ENCODE measurements at regions of chr20 and their contacts with region 1.

Region 1: GRCh38 chr20:32762149-32762753 is at the start of gene DNMT3B:
- DNase-seq: no peak
- H3K4me3 ChIP-seq: peak within 1 kb of the TSS; percentile 75
- CTCF ChIP-seq: peak; percentile 14

Region 2: DNA sequence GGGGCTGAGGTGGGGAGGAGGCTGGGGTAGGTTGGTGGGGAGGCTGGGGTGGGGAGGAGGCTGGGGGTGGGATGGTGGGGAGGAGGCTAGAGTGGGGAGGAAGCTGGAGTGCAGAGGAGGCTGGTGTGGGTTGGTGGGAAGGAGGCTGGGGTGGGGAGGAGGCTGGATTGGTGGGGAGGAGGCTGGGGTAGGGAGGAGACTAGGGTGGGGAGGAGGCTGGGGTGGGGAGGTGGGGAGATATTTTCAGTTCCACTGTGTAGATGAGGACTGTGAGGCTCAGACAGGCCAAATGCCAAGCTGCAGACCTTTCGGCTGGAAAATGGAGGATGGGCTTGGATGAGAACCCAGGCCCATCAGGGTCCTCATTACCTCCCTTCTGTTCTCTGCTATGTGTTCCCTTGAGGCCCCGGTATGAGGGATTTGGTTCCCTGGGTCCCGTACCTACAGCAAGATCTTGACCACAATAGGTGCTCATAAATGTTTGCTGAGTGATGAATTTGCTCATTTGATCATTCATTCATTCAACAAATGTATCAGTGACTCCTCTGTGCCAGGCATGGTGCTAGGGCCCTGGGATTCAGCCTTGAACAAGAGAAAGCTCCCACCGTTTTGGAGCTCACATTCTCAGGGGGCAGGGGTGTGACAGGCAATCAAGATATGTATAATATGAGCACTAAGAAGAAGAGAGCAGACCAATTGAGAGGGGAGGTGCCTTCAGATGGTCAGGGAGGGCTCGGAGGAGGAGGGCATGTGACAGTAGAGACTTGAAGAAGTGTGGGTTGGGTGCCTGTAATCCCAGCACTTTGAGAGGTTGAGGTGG is 141.0 kb before region 1 on chr20:
- CTCF ChIA-PET with region 1: no interaction called
- POLR2A ChIA-PET with region 1: no interaction called
- DNase-seq: no peak
- H3K4me3 ChIP-seq: no peak overlapping the region
- CTCF ChIP-seq: no peak

Region 3: DNA sequence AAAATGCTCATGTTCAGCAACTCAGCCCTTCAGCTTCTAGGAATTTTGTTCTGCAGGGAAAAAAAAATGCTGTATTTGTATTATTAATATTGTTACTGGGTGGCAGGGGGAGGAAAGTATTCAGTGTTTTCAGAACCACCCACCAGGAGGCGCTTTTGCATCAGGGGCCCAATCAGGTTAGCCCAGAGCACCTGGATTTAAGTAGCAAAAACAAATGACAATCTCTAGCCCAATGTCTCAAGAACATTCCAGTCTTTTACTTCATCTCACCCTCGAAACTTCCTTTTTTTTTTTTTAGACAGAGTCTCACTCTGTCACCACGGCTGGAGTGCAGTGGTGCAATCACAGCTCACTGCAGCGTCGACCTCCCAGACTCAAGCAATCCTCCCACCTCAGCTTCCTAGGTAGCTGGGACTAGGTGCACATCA is 87.9 kb before region 1 on chr20:
- CTCF ChIA-PET with region 1: interaction called, 29 read pairs
- POLR2A ChIA-PET with region 1: no interaction called
- DNase-seq: no peak
- H3K4me3 ChIP-seq: no peak overlapping the region
- CTCF ChIP-seq: peak; percentile 67

Region 4: GRCh38 chr20:32743237-32744112 is 18.8 kb before region 1 on chr20 and contains the start of gene COMMD7:
- CTCF ChIA-PET with region 1: interaction called, 10 read pairs
- POLR2A ChIA-PET with region 1: interaction called, 9 read pairs
- DNase-seq: no peak
- H3K4me3 ChIP-seq: peak within 1 kb of the TSS; percentile 75
- CTCF ChIP-seq: no peak